PC-3 (cell line): ENCODE measurements at regions of chr4 and their contacts with region 1.

Region 1: GRCh38 chr4:96753216-96753615 is 913.3 kb downstream of the PDHA2 start:
- DNase-seq: no peak
- ATAC-seq: no peak
- H3K4me3 ChIP-seq: no peak overlapping the region
- H3K27ac ChIP-seq: no peak overlapping the region
- H3K4me1 ChIP-seq: no peaks in the 10 kb centered on the region
- H3K27me3 ChIP-seq: no peaks in the 10 kb centered on the region
- CTCF ChIP-seq: no peak

Region 2: GRCh38 chr4:95439896-95440295 is 1313.3 kb before region 1 on chr4:
- CTCF ChIA-PET with region 1: no interaction called
- POLR2A ChIA-PET with region 1: no interaction called
- intact Hi-C with region 1: no loop called
- DNase-seq: no peak
- ATAC-seq: no peak
- H3K4me3 ChIP-seq: no peak overlapping the region
- H3K27ac ChIP-seq: no peak overlapping the region
- H3K4me1 ChIP-seq: no peaks in the 10 kb centered on the region
- H3K27me3 ChIP-seq: no peaks in the 10 kb centered on the region
- CTCF ChIP-seq: no peak

Region 3: DNA sequence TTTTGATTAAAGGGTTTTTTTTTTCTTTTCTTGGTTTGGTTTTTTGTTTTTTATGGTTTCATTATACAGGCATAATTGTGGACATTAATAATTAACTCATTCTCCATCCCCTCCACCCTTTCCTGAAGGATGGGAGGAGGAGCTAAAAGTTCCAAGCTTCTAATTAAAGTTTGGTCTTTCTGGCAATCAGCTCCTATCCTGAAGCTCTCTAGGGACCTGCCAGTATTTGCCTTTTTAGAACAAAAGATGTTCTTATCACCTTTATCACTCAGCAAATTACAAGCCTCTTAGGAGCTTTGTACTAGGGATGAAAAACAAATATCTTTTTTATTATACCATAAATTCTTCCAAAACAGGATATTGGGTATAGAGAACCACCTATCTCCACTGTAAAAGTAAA is 323.6 kb before region 1 on chr4:
- CTCF ChIA-PET with region 1: no interaction called
- POLR2A ChIA-PET with region 1: interaction called, 19 read pairs
- intact Hi-C with region 1: no loop called
- DNase-seq: no peak
- ATAC-seq: no peak
- H3K4me3 ChIP-seq: no peak overlapping the region
- H3K27ac ChIP-seq: no peak overlapping the region
- H3K4me1 ChIP-seq: no peaks in the 10 kb centered on the region
- H3K27me3 ChIP-seq: no peaks in the 10 kb centered on the region
- CTCF ChIP-seq: no peak

Region 4: GRCh38 chr4:96736352-96736889 is 16.8 kb before region 1 on chr4:
- CTCF ChIA-PET with region 1: no interaction called
- POLR2A ChIA-PET with region 1: no interaction called
- intact Hi-C with region 1: no loop called
- DNase-seq: peak; percentile 62
- ATAC-seq: peak; percentile 97
- H3K4me3 ChIP-seq: no peak overlapping the region
- H3K27ac ChIP-seq: no peak overlapping the region
- H3K4me1 ChIP-seq: peaks cover 4% of the 10 kb centered on the region
- H3K27me3 ChIP-seq: no peaks in the 10 kb centered on the region
- CTCF ChIP-seq: no peak

Region 5: GRCh38 chr4:96786306-96786705 is 33.1 kb after region 1 on chr4:
- CTCF ChIA-PET with region 1: no interaction called
- POLR2A ChIA-PET with region 1: no interaction called
- intact Hi-C with region 1: no loop called
- DNase-seq: no peak
- ATAC-seq: no peak
- H3K4me3 ChIP-seq: no peak overlapping the region
- H3K27ac ChIP-seq: no peak overlapping the region
- H3K4me1 ChIP-seq: no peaks in the 10 kb centered on the region
- H3K27me3 ChIP-seq: no peaks in the 10 kb centered on the region
- CTCF ChIP-seq: no peak

Region 6: DNA sequence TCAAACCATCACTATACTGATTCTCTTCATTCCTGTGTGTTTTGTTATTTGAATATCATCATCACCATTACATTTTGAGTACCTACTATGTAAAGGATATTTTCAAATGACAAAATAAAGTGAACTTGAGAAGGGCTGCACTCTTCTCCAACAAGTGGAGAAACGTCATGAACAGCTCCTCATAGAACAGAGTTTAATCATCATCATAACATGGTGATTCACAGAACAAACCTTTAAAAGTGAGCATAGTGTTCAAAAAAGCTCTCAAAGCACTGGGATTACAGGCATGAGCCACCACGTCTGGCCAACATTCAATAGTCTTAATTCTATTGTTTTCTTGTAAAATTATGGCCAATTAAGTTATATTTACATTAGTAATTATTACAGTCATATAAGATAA is 80.6 kb after region 1 on chr4:
- CTCF ChIA-PET with region 1: no interaction called
- POLR2A ChIA-PET with region 1: no interaction called
- intact Hi-C with region 1: no loop called
- DNase-seq: peak; percentile 45
- ATAC-seq: peak; percentile 98
- H3K4me3 ChIP-seq: no peak overlapping the region
- H3K27ac ChIP-seq: no peak overlapping the region
- H3K4me1 ChIP-seq: no peaks in the 10 kb centered on the region; the same call in 1 of the 2 replicates
- H3K27me3 ChIP-seq: no peaks in the 10 kb centered on the region
- CTCF ChIP-seq: no peak